ENCODE measurements at regions of chr1 and their contacts with region 1.

Region 1: DNA sequence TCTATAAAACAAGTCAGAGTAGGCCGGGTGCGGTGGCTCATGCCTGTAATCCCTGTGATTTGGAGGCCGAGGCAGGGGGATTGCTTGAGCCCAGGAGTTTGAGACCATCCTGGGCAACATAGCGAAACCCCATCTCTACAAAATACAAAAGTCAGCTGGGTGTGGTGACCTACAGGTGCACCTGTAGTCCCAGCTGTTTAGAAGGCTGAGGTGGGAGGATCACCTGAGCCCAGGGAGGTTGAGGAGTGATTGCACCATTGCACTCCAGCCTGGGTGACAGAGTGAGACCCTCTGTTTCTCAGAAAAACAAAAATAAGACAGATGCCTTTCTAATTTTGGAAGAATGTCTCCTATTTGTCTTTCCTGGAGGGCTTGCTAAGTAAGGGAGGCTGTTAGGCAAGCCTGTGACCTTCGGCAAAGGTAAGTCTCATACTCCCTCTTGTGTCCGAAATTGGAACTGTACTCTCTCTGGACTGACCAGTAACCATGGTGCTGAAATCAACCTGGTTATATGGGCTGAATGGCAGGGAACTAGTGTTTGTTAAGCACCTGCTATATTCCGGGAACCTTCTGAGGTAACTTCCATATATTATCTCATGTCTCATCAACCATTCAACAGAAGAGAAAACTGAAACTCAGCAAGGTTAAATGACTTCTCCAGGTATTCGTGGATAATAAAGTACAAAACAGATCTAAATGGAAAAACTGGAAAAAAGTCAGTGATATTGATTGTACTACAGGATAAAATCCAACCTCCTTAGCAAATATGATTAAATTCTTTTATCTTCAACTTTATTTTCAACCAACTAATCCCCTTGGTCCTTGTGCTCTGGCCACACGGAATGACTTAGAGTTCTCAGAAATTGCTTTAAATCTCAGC is 11.8 kb upstream of the RAB3B start:
- H3K4me3 Mint-ChIP-seq: no peak overlapping the region
- H3K27ac Mint-ChIP-seq: no peak overlapping the region
- H3K4me1 Mint-ChIP-seq: no peaks in the 10 kb centered on the region
- H3K27me3 Mint-ChIP-seq: peaks cover 24% of the 10 kb centered on the region

Region 2: GRCh38 chr1:51740652-51741051 is 261.6 kb before region 1 on chr1:
- intact Hi-C with region 1: no loop called
- H3K4me3 Mint-ChIP-seq: no peak overlapping the region
- H3K27ac Mint-ChIP-seq: no peak overlapping the region
- H3K4me1 Mint-ChIP-seq: peaks cover 14% of the 10 kb centered on the region
- H3K27me3 Mint-ChIP-seq: no peaks in the 10 kb centered on the region

Region 3: DNA sequence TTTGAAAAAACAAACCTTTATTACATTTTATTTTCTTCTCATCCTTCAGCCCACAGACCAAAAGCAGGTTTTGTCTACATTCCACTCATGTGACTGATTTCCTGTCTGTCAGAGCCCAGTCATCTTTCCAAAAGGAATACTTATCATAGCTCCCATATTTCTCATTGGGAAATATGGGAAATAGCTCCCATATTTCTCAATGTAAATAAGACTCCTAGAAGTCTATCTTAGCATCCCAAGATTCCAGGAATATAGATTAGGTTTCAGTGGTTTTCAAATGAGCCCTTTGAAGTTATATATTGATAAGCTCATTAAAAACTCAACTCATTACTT is 104.6 kb before region 1 on chr1:
- intact Hi-C with region 1: loop called (anchors 1 kb)
- H3K4me3 Mint-ChIP-seq: no peak overlapping the region
- H3K27ac Mint-ChIP-seq: no peak overlapping the region
- H3K4me1 Mint-ChIP-seq: no peaks in the 10 kb centered on the region
- H3K27me3 Mint-ChIP-seq: peaks cover 47% of the 10 kb centered on the region

Region 4: DNA sequence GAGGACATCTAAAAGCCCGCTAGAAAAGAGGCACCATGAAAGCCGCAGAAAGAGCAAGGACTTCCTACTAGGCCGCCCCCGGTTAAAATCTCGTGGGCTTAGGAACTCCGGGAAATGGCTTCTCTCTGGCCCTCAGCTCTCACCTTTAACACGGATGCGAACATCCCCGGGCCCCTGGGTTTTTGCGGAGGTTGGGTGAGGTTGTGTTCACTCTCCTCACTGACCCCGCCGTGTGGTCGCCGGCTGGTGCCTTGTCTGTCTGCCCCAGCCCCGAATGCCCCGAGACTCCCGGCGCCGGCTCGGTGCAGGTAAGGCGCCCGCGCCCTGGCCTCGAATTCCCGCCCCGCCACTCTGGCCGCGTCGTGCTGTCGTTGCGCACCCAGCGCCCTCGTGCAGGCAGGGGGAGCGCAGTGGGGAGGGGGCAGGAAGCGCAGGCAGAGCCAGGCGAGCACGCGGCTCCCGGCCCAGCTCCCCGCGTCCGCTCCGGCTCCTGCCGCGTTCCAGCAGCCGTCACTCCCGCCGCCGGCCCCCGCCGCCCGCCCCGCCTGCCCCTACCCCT is 630.5 kb after region 1 on chr1 and contains the start of gene SHISAL2A:
- intact Hi-C with region 1: no loop called
- H3K4me3 Mint-ChIP-seq: peak within 1 kb of the TSS; percentile 78
- H3K27ac Mint-ChIP-seq: no peak within 1 kb of the TSS
- H3K4me1 Mint-ChIP-seq: peaks cover 37% of the 10 kb centered on the region
- H3K27me3 Mint-ChIP-seq: peaks cover 33% of the 10 kb centered on the region